ENCODE measurements at regions of chr14 and their contacts with region 1.

Region 1: GRCh38 chr14:49867831-49868723 is 15.5 kb upstream of the NEMF start:
- DNase-seq: peak; percentile 96
- H3K4me3 ChIP-seq: peak overlapping the region; percentile 59 to 73
- H3K27ac ChIP-seq: peak overlapping the region; percentile 74 to 75
- H3K4me1 ChIP-seq: peaks cover 3 to 5% of the 10 kb centered on the region in 2 experiments; a peak in 1 of 4 replicates
- H3K27me3 ChIP-seq: no peaks in the 10 kb centered on the region
- CTCF ChIP-seq: no peak
- EP300 ChIP-seq: no peak
- RAD21 ChIP-seq: no peak

Region 2: DNA sequence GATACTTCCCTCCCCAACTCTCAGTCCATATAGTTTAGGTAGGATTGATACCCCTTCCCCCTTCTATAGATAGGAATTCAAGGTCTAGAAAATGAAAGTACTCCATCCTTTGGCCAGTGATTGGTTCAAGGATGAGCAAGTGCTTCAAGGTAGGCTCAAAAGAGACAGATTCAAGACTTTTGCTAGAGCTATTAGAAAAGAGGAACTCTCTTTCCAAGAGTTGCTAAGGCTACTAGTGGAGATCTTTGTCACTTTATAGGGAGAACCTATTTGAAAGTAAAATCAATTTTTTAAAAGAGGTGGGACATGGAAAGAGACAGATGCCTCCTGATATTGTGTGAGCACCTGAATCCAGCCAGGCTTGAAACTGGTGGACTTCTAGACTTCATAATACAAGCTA is 197.6 kb before region 1 on chr14:
- CTCF ChIA-PET with region 1: no interaction called
- POLR2A ChIA-PET with region 1: no interaction called
- DNase-seq: no peak
- H3K4me3 ChIP-seq: no peak overlapping the region
- H3K27ac ChIP-seq: no peak overlapping the region
- H3K4me1 ChIP-seq: no peaks in the 10 kb centered on the region
- H3K27me3 ChIP-seq: no peaks in the 10 kb centered on the region
- CTCF ChIP-seq: no peak
- EP300 ChIP-seq: no peak
- RAD21 ChIP-seq: no peak

Region 3: DNA sequence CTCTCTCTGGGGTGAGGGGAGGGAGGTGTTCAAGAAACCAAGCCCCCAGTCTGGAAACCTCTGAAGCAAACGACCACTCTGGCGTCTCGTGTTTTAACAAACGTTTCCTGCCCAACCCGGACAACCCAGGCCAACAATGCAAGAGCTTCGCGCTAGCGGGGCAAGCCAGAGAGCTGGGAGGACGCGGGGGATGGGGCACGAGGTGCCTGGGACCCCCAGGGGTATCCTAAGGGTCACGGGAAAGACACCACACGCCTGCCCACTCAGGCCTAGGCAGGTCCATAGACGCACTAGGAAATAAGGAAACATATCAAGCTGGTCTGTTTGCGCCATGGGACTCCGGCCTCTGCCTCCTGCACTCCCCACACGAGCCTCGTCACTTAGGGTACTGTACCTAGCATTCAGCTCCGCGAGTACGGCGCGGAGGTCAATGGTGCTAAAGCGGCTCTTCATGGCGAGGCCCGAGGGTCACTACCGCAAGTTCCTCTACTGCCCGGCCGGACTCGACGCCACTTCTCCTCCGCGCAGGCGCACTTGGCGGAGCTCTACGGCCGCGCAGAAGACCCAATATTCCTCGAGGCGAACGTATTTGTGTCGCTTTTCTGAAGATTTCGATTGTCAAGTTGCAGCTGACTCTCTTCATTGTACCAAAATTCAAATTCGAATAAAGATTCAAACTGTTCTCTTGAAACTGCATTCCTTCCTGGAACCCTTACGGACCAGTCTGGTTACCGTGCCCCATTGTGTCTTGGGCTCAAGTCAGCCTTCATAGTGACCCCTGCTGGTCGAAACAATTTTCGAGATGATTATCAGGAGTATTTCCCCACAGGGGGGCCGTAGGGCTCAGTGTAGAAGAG is 15.5 kb before region 1 on chr14 and contains the start of gene NEMF:
- CTCF ChIA-PET with region 1: interaction called, 202 read pairs
- POLR2A ChIA-PET with region 1: interaction called, 18 read pairs
- DNase-seq: peak; percentile 84
- H3K4me3 ChIP-seq: peak within 1 kb of the TSS; percentile 85 to 87
- H3K27ac ChIP-seq: peak within 1 kb of the TSS; percentile 80 to 87
- H3K4me1 ChIP-seq: peaks cover 0 to 3% of the 10 kb centered on the region in 2 experiments; a peak in 3 of 4 replicates
- H3K27me3 ChIP-seq: no peaks in the 10 kb centered on the region
- CTCF ChIP-seq: peak; percentile 96
- EP300 ChIP-seq: no peak
- RAD21 ChIP-seq: no peak
- polyA plus RNA-seq, gene NEMF: 14.0 and 15.4 TPM in 2 replicates

Region 4: DNA sequence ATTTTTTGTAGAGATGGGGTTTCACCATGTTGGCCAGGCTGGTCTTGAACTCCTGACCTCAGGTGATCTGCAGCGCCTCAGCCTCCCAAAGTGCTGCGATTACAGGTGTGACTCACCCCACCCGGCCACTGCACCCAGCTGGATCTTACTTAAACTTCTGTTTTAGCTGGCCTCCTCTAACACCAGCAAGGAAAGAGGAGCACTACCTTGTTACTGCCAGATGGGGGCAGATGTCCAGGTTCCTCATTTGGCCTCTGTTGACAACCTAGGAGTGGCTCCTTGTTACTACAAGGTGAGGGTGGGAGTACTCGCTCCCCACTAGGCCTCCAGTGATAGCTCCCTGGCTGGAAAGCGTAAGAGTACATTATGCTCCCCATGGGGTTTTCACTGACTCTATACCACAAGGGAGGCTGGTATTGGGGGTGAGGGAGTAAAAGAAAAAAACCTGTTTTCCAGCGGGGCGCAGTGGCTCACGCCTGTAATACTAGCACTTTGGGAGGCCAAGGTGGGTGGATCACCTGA is 11.7 kb after region 1 on chr14:
- CTCF ChIA-PET with region 1: interaction called, 12 read pairs
- POLR2A ChIA-PET with region 1: no interaction called
- DNase-seq: peak; percentile 65
- H3K4me3 ChIP-seq: no peak overlapping the region
- H3K27ac ChIP-seq: no peak overlapping the region
- H3K4me1 ChIP-seq: no peaks in the 10 kb centered on the region
- H3K27me3 ChIP-seq: no peaks in the 10 kb centered on the region
- CTCF ChIP-seq: peak; percentile 69
- EP300 ChIP-seq: no peak
- RAD21 ChIP-seq: peak; percentile 70

Region 5: DNA sequence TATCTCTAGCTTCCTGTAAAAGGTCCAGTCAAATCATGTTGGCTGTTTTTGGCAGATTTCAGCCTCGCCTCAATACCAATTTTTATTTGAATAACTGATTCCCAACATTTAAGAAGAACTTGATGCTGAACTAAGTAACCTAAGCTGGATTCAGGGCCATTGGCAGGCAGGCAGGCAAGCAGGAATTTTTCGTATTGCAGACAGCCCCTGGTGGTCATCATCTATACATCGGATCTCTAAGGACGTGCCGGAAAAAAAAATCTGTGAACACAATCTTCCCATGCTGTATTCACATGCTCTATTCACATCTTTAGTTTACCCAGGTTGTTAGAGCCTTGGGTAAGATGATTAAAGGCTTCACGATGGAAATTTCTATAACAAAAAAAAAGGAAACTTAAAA is 241.3 kb after region 1 on chr14:
- CTCF ChIA-PET with region 1: interaction called, 204 read pairs
- POLR2A ChIA-PET with region 1: interaction called, 4 read pairs
- DNase-seq: peak; percentile 26
- H3K4me3 ChIP-seq: no peak overlapping the region
- H3K27ac ChIP-seq: no peak overlapping the region
- H3K4me1 ChIP-seq: no peaks in the 10 kb centered on the region
- H3K27me3 ChIP-seq: no peaks in the 10 kb centered on the region
- CTCF ChIP-seq: peak; percentile 56
- EP300 ChIP-seq: no peak
- RAD21 ChIP-seq: peak; percentile 26; the same call in 1 of the 2 replicates

Region 6: DNA sequence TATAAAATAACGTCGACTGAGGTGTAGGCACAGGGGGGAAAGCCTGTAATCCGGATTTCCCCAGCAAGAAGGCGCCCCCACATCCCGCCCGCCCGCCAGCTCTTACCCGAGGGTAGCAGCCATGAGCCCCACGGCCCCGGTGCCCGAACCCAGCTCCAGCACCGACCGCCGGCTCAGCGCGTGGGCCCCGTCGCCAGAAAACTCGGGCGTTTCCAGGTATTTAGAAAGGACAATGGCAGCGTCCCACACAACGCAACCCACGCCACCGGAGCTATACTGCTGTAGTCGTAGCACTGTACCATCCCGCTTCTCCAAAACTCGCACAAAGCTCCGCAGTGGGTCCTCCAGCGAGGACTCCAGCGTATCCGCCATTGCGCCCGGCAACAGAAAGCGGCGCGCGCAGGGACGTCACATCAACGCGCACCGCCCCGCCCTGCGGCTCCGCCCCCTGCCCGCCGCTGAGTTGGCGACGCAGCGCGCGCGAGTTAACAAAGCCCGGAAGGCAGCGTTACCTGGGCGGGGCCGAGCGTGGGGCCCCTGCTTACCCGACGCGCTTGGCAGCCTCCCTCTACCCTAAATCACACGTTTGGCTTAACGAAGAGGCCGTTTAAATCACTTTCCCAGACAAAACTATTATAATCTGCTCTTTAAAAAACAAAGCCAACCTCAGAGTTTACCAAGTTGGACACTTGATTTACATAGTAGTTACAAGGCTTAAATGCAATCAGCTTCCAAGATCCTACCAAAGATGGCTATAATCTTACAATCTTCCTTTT is 248.3 kb after region 1 on chr14 and contains the start of gene VCPKMT:
- CTCF ChIA-PET with region 1: interaction called, 27 read pairs
- POLR2A ChIA-PET with region 1: interaction called, 8 read pairs
- DNase-seq: peak; percentile 95
- H3K4me3 ChIP-seq: peak within 1 kb of the TSS; percentile 86 to 87
- H3K27ac ChIP-seq: peak within 1 kb of the TSS; percentile 88 to 92
- H3K4me1 ChIP-seq: peaks cover 8% of the 10 kb centered on the region in 2 experiments
- H3K27me3 ChIP-seq: no peaks in the 10 kb centered on the region
- CTCF ChIP-seq: no peak
- EP300 ChIP-seq: 0 out of 4 replicates have a peak, but pooled peaks of 1 of the 2 experiments have one; percentile 21
- RAD21 ChIP-seq: no peak
- polyA plus RNA-seq, gene VCPKMT: 6.7 and 7.3 TPM in 2 replicates